Activated CD4-positive, alpha-beta memory T cell treated with anti-CD3 and anti-CD28 coated beads, Interleukin-2, amount 10 ng/mL, durations not matched to agents 7 days and 5 days (primary cell): ENCODE measurements at regions of chr19 and their contacts with region 1.

Region 1: DNA sequence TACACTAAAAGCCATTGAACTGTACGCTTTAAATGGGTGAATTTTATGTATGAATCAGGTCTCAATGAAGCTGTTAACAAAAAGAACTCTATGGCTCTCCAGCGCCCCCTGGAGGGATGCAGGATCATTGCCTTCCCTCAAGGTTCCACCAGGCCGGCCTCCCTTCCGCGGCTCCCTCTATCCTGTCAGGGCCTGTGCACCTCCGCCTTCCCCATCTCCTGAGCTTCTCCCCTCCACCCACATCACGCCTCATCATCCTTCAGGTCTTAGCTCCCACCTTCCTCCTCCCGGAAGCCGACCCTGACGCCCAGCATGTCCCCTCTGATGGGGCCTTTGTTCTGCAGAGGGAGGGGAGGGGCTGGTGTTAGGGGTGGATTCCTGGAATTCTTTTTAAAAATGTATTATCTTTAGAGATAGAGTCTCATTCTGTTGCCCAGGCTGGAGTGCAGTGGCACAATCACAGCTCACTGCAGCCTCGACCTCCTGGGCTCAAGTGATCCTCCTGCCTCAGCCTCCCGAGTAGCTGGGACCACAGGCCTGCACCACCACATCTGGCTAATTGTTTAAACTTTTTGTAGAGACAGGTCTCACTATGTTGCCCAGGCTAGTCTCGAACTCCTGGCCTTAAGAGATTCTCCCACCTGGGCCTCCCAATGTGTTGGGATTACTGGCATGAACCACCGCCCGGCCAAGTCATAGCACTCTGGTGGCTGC is 27.7 kb downstream of the MEIS3 start:
- DNase-seq: peak; percentile 86
- H3K4me3 Mint-ChIP-seq: no peak overlapping the region
- H3K27ac Mint-ChIP-seq: no peak overlapping the region
- H3K4me1 Mint-ChIP-seq: peaks cover 6% of the 10 kb centered on the region
- H3K27me3 Mint-ChIP-seq: peaks cover 6% of the 10 kb centered on the region

Region 2: GRCh38 chr19:47284324-47284899 is 107.3 kb before region 1 on chr19:
- CTCF ChIA-PET with region 1: interaction called, 22 read pairs
- POLR2A ChIA-PET with region 1: no interaction called
- DNase-seq: peak; percentile 35
- H3K4me3 Mint-ChIP-seq: no peak overlapping the region
- H3K27ac Mint-ChIP-seq: no peak overlapping the region
- H3K4me1 Mint-ChIP-seq: peaks cover 7% of the 10 kb centered on the region
- H3K27me3 Mint-ChIP-seq: no peaks in the 10 kb centered on the region

Region 3: GRCh38 chr19:47296036-47296435 is 95.6 kb before region 1 on chr19:
- CTCF ChIA-PET with region 1: interaction called, 77 read pairs
- POLR2A ChIA-PET with region 1: interaction called, 3 read pairs
- DNase-seq: peak; percentile 81
- H3K4me3 Mint-ChIP-seq: no peak overlapping the region
- H3K27ac Mint-ChIP-seq: no peak overlapping the region
- H3K4me1 Mint-ChIP-seq: peaks cover 13% of the 10 kb centered on the region
- H3K27me3 Mint-ChIP-seq: no peaks in the 10 kb centered on the region